ENCODE measurements at regions of chr18 and their contacts with region 1.

Region 1: DNA sequence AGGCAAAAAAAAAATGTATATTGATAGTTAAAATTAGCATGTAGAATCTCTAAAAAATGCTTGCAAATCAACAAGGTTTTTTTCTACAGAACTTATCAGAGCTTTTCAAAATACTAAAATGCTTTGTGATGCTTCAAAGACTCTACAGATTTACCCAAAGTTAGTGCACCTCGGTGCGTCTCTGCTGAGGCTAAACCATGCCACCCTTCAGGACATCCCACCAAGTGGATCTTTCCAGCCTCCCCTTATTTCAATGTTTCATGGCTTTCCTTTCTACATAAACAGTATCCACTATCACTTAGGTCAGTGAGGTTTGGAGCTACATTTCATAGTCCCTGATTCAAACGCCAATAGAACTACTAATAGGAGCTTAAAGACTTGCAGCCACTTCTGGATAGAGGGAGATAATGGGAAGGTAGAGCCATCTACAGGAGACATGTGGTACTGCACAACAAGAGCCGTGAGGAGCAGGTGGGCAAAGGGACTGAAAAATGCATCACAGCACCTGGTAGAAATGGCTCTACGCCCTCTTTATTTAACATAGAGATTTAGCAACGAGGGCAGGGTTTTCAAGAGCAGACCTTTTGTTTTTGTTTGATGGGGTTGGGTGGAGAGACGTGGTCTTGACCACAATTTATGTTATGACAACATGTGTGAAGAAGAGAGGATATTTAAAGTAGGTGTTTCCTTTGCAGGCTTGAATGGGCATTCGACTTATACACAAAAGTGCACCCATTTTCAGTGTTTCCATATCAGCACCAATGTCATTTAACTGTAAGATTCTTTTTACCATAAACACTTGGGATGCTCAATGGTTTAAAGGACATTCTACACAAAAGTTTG is 56.1 kb upstream of the SLC35G4 start:
- DNase-seq: peak; percentile 57 to 66 (median 60)
- ATAC-seq: peak; percentile 88
- H3K4me3 ChIP-seq: no peak overlapping the region
- H3K27ac ChIP-seq: no peak overlapping the region
- H3K4me1 ChIP-seq: no peaks in the 10 kb centered on the region
- H3K27me3 ChIP-seq: no peaks in the 10 kb centered on the region; a peak in 1 of 5 replicates
- CTCF ChIP-seq: peak; percentile 61 to 83 (median 76)
- EP300 ChIP-seq: no peak
- POLR2A ChIP-seq: no peak
- RAD21 ChIP-seq: peak in 1 of 2 experiments; percentile 68; a peak in 2 of 4 replicates

Region 2: DNA sequence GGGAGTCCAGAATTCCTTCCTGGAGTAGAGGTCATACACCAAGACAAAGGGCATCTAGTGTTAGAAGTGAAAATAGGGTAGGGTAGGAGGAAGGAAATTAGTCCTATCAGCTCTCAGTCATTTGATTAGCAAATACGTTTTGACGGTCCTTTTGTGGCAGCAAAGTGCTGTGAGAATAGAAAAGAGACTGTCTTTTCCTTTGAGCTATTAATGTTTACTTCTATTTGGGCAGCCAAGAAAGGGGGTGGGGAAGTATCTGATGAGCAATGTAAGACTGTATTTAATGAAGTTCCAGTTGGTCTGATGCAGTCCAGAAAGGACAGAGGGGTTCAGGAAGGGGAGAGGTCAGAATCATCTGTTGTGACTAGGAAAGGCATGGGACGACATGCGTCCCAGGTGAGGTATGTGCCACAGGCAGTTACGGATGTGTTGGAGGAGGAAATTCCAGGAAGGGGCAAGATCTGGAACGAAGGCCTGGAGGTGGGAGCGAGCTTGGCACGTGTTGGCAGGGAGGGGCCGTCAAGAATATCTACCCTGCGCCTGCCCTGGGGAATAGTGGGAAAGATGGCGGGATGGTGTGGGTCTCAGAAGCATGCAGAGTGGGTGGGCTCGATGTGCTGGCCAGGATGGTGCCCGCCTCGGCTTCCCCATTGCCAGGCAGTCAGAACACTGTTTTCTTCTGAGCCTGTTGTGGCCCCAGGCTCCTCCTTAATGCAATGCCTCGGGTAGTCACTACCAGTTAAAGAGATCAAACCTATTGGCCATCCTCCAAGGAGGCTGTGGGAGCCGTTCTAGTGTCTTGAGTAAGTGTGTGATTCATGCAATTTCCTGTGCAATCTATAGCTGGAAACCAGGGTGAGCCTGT is 1725.4 kb before region 1 on chr18:
- CTCF ChIA-PET with region 1: no interaction called
- POLR2A ChIA-PET with region 1: no interaction called
- in situ Hi-C with region 1: no loop called
- intact Hi-C with region 1: no loop called
- DNase-seq: peak; percentile 42 to 94 (median 62)
- ATAC-seq: peak; percentile 81
- H3K4me3 ChIP-seq: no peak overlapping the region
- H3K27ac ChIP-seq: peak overlapping the region; percentile 83
- H3K4me1 ChIP-seq: peaks cover 50 to 71% of the 10 kb centered on the region in 2 experiments
- H3K27me3 ChIP-seq: no peaks in the 10 kb centered on the region
- CTCF ChIP-seq: no peak
- EP300 ChIP-seq: peak; percentile 64; the same call in 1 of the 2 replicates
- POLR2A ChIP-seq: no peak
- RAD21 ChIP-seq: peak; percentile 19 to 21; a peak in 1 of 4 replicates

Region 3: DNA sequence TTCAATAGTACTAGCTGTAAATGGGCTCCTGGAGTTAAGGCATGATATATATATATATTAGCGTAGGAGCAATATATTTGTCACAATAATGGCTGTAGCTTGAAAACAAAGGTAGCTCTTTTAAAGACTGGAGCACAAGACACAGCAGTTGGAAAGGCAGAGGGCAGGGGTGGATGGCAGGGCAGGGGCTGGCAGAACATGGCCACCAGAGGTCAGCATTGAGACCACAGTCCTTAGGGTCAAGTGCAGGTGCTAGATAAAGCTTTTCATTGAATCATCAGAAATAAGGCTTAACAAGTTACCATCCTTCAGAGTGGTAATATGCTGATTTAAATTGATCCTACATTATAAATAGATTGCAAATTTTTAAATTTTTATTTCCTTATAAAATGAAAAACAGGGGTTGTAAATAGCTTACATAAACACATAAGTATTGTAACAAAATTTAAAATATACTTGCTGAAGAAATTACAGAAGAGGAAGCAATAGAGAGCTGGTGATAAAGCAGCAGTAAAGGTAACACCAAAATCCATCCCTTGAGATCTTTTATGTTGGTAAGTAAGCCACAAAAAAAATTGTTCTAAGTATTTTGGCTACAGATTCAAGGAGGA is 242.7 kb before region 1 on chr18:
- CTCF ChIA-PET with region 1: interaction called, 8 read pairs
- POLR2A ChIA-PET with region 1: no interaction called
- in situ Hi-C with region 1: no loop called
- intact Hi-C with region 1: loop called (anchors 1 kb)
- DNase-seq: peak; percentile 28 to 56 (median 40)
- ATAC-seq: peak; percentile 87
- H3K4me3 ChIP-seq: no peak overlapping the region
- H3K27ac ChIP-seq: no peak overlapping the region
- H3K4me1 ChIP-seq: no peaks in the 10 kb centered on the region
- H3K27me3 ChIP-seq: no peaks in the 10 kb centered on the region; a peak in 1 of 5 replicates
- CTCF ChIP-seq: peak; percentile 60 to 70 (median 65)
- EP300 ChIP-seq: no peak
- POLR2A ChIP-seq: no peak
- RAD21 ChIP-seq: peak in 1 of 2 experiments; percentile 46; a peak in 2 of 4 replicates

Region 4: DNA sequence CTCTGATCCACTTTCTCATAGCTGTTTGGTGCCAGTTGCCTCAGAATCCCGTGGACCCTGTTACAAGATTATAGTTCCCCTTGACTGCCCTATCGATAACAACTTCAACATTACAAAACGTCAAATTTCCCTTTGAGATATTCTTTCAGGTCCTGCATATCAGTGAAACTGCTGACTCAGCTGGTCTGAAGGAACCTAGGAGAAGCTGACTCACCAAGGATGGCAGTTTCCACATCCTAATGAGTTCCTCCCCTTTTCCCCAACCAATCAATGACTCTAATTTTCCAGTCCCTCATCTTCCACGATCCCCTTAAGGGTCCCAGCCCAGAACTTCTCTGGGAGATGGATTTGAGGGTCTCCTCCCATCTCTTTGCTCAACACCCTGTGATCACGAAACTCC is 108.1 kb after region 1 on chr18:
- CTCF ChIA-PET with region 1: no interaction called
- POLR2A ChIA-PET with region 1: no interaction called
- in situ Hi-C with region 1: no loop called
- intact Hi-C with region 1: no loop called
- DNase-seq: peak in 1 of 4 experiments; percentile 9
- ATAC-seq: no peak
- H3K4me3 ChIP-seq: no peak overlapping the region
- H3K27ac ChIP-seq: no peak overlapping the region
- H3K4me1 ChIP-seq: no peaks in the 10 kb centered on the region
- H3K27me3 ChIP-seq: peaks cover 12 to 24% of the 10 kb centered on the region in 2 experiments; a peak in 3 of 5 replicates
- CTCF ChIP-seq: no peak
- EP300 ChIP-seq: no peak
- POLR2A ChIP-seq: no peak
- RAD21 ChIP-seq: no peak